Left ventricle myocardium inferior (tissue), 1 donor: ENCODE measurements at regions of chr17 and their contacts with region 1.

Region 1: DNA sequence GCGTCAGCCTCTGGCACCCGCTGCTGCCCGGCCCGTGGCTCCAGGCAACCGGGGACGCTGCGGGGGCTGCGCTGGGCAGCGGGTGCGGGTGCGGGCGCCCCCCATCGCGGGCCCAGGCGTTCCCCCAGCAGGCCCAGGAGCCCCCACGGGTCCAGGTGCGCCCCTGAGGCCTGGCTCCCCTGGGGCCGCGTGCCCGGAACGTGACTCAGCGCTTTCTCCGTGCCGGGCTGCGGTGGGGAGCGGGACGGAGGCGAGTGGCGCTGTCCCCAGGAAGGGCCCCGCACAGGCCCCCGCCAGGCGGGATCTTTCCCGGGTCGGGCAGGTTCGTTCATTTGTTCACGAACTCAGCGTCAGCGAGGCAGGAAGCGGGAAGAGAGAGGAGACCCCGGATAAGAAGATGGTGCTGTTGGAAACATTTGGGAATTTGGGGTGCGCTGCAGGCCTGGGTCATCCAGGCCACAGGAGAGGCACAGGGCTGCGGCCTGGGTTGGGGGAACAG is 18.4 kb upstream of the EXOC7 start:
- DNase-seq: no peak
- H3K4me3 ChIP-seq: peak overlapping the region; percentile 62
- H3K27ac ChIP-seq: peak overlapping the region; percentile 19
- H3K4me1 ChIP-seq: peaks cover 7% of the 10 kb centered on the region
- H3K27me3 ChIP-seq: no peaks in the 10 kb centered on the region
- CTCF ChIP-seq: no peak

Region 2: DNA sequence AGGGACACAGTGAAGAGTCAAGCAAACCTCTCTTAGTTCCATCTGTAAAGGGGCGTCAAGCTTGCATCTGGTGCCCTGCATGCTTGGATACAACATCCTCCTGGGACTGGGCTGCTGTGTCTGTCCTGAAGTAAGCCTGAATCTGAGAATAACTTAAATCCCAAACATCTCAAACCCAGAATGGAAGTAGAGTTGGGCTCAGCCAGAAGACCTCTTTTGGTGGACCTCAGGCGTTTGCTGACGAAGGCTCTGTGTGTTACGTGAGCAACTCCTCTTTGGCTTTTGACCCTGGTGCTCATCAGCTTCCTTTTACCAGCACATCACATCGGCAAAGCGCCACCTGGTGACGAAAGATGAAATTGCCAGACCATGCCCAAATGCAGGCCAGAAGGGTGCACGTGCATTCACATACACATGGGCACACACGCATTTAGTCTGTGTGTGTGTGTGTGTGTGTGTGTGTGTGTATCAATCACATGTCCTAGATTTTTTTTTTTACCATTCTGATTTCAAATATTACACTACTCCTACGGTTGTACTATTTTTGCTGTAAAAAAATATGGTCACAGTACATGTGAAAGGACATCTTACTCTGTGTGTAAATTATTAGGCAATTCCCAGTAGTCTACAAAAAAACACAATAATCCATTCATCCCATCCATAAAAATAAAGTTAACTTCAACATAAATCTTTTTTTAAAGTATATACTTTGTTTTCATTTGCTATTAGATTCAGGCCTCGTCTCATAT is 60.2 kb after region 1 on chr17:
- intact Hi-C with region 1: loop called (anchors 10 kb)
- DNase-seq: peak; percentile 86
- H3K4me3 ChIP-seq: no peak overlapping the region
- H3K27ac ChIP-seq: peak overlapping the region; percentile 27
- H3K4me1 ChIP-seq: peaks cover 8% of the 10 kb centered on the region
- H3K27me3 ChIP-seq: no peaks in the 10 kb centered on the region
- CTCF ChIP-seq: peak; percentile 90

Region 3: GRCh38 chr17:76278952-76279741 is 157.2 kb after region 1 on chr17:
- intact Hi-C with region 1: loop called (anchors 5 kb)
- DNase-seq: peak; percentile 89
- H3K4me3 ChIP-seq: no peak overlapping the region
- H3K27ac ChIP-seq: no peak overlapping the region
- H3K4me1 ChIP-seq: peaks cover 24% of the 10 kb centered on the region
- H3K27me3 ChIP-seq: no peaks in the 10 kb centered on the region
- CTCF ChIP-seq: peak; percentile 98